Naive thymus-derived CD4-positive, alpha-beta T cell (primary cell): ENCODE measurements at regions of chr11 and their contacts with region 1.

Region 1: DNA sequence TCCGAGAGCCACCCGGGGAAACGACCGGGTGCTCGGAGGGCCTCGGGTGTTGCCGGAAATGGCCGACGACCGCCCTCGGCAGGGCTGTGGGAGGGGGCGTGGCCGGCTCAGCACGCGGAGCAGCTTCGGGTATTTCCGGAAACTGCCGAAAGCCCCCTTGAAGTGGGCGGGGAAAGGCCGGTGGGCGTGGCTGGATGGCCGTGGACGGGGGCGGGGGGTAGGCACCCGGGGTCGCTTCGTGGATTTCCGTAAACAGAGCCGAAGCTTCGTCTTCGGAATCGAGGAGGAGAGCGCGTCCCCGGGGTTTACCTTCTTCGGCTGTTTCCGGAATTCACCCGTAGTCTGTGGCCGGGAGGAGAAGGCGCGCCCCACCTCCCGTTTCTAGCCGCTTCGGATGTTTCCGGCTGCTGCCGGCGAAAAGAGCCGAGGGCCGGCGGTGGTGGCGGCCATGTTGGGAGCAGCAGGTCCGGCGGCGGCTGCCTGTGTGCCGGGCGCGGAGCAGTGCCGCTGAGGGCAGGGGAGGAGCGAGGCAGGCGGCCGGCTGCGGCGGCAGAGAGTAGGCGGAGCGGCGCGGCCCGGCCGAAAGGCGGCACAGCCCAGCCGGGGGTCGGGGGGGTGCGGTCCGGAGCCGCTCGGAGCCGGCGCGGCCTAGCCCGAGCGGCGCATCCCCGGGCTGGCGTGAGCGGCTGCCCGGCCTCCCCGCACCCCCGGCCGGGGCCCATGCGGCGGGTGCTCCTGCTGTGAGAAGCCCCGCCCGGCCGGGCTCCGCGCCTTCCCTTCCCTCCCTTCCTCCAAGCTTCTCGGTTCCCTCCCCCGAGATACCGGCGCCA is at the start of gene MARK2:
- DNase-seq: peak; percentile 99 to 100 (median 99)
- ATAC-seq: peak; percentile 93
- H3K4me3 ChIP-seq: peak within 1 kb of the TSS; percentile 87
- H3K4me3 Mint-ChIP-seq: peak within 1 kb of the TSS; percentile 86 to 99 (median 92)
- H3K27ac ChIP-seq: peak within 1 kb of the TSS; percentile 94
- H3K27ac Mint-ChIP-seq: peak within 1 kb of the TSS; percentile 74 to 97 (median 88)
- H3K4me1 ChIP-seq: peaks cover 32 to 35% of the 10 kb centered on the region in 2 donors
- H3K4me1 Mint-ChIP-seq: peaks cover 44 to 57% (median 54%) of the 10 kb centered on the region in 7 donors
- H3K27me3 ChIP-seq: no peaks in the 10 kb centered on the region
- H3K27me3 Mint-ChIP-seq: no peaks in the 10 kb centered on the region
- total RNA-seq, gene MARK2: 42.3 to 69.1 (median 56.8) TPM

Region 2: GRCh38 chr11:62726915-62727763 is 1111.8 kb before region 1 on chr11 and contains the start of gene HNRNPUL2:
- CTCF ChIA-PET with region 1: no interaction called
- POLR2A ChIA-PET with region 1: no interaction called
- intact Hi-C with region 1: loop called in 1 of 2 experiments (anchors 2 kb)
- DNase-seq: peak; percentile 96 to 100 (median 99)
- ATAC-seq: peak; percentile 89
- H3K4me3 ChIP-seq: peak within 1 kb of the TSS; percentile 87
- H3K4me3 Mint-ChIP-seq: peak within 1 kb of the TSS; percentile 91 to 99 (median 96)
- H3K27ac ChIP-seq: peak within 1 kb of the TSS; percentile 92
- H3K27ac Mint-ChIP-seq: peak within 1 kb of the TSS; percentile 95 to 100 (median 98)
- H3K4me1 ChIP-seq: peaks cover 36 to 38% of the 10 kb centered on the region in 2 donors
- H3K4me1 Mint-ChIP-seq: peaks cover 23 to 65% (median 58%) of the 10 kb centered on the region in 7 donors
- H3K27me3 ChIP-seq: no peaks in the 10 kb centered on the region
- H3K27me3 Mint-ChIP-seq: peaks cover 0 to 2% (median 0%) of the 10 kb centered on the region in 5 donors
- total RNA-seq, gene HNRNPUL2: 43.4 to 77.5 (median 65.3) TPM

Region 3: DNA sequence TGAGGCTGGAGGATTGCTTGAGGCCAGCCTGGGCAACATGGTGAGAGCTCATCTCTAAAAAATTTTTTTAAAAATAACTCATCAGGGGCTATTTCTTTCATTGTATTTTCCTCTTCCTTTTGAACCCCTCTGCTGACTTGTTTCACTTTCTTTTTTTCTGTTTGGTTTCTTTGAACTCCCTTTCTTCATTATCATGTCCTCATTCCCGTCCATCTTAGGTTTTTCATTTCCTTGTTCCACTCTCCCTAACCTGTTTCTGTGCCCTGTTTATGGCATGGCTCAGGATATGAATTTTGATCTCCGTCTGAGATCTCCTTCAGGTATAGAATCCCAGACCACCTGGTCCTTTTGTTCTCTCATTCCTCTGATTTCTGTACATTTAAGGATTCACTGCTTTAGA is 12.5 kb after region 1 on chr11:
- CTCF ChIA-PET with region 1: interaction called, 7 read pairs
- POLR2A ChIA-PET with region 1: interaction called, 3 read pairs
- intact Hi-C with region 1: loop called in 1 of 2 experiments (anchors 1 kb)
- DNase-seq: no peak
- ATAC-seq: no peak
- H3K4me3 ChIP-seq: peak overlapping the region; percentile 17
- H3K4me3 Mint-ChIP-seq: peak overlapping the region; percentile 58 to 83 (median 78)
- H3K27ac ChIP-seq: peak overlapping the region; percentile 59
- H3K27ac Mint-ChIP-seq: peak overlapping the region; percentile 57 to 90 (median 87)
- H3K4me1 ChIP-seq: peaks cover 42 to 46% of the 10 kb centered on the region in 2 donors
- H3K4me1 Mint-ChIP-seq: peaks cover 58 to 85% (median 76%) of the 10 kb centered on the region in 7 donors
- H3K27me3 ChIP-seq: no peaks in the 10 kb centered on the region
- H3K27me3 Mint-ChIP-seq: no peaks in the 10 kb centered on the region

Region 4: GRCh38 chr11:63906585-63906984 is 67.7 kb after region 1 on chr11:
- CTCF ChIA-PET with region 1: interaction called, 35 read pairs
- POLR2A ChIA-PET with region 1: interaction called, 13 read pairs
- intact Hi-C with region 1: loop called (anchors 1 kb)
- DNase-seq: peak in 7 of 9 donors; percentile 38 to 65 (median 60)
- ATAC-seq: peak; percentile 70
- H3K4me3 ChIP-seq: no peak overlapping the region
- H3K4me3 Mint-ChIP-seq: no peak overlapping the region
- H3K27ac ChIP-seq: no peak overlapping the region
- H3K27ac Mint-ChIP-seq: peak overlapping the region in 4 of 9 donors; percentile 17 to 80 (median 61)
- H3K4me1 ChIP-seq: no peaks in the 10 kb centered on the region
- H3K4me1 Mint-ChIP-seq: peaks cover 0 to 6% (median 3%) of the 10 kb centered on the region in 7 donors
- H3K27me3 ChIP-seq: no peaks in the 10 kb centered on the region
- H3K27me3 Mint-ChIP-seq: no peaks in the 10 kb centered on the region

Region 5: DNA sequence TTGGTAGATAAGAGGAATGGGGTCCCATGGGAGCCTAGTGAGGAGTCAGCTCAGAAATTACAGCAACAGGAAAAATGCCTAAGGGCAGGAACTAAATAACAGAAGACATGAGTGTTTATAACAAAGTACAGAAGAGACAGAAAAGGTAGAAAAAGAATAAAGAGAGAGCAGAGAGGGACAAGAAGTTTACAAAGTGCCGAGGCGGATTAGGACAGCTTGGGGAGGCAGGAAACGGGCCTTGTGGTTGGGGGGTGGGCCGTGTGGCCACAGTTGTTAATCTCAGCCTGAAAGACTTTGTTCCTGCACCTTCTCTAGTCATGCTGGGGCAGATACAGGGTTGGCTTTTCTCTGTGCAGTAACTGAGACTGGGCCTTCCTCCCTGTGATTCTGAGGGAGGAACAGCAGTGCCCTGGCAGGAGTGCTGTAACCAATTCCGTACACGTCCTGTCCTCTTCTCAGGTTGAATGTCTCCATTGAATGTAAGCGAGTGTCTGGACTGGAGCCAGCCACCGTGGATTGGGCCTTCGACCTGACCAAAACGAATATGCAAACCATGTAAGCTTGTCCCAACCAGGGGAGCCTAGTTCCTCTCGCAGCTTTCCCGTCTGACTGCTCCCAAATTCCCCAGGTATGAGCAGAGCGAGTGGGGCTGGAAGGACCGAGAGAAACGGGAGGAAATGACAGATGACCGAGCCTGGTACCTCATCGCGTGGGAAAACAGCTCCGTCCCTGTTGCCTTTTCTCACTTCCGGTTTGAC is 113.1 kb after region 1 on chr11:
- CTCF ChIA-PET with region 1: interaction called, 148 read pairs
- POLR2A ChIA-PET with region 1: interaction called, 6 read pairs
- intact Hi-C with region 1: no loop called
- DNase-seq: peak in 3 of 9 donors; percentile 15 to 36 (median 21)
- ATAC-seq: peak; percentile 32
- H3K4me3 ChIP-seq: peak overlapping the region; percentile 13
- H3K4me3 Mint-ChIP-seq: peak overlapping the region; percentile 6 to 74 (median 51)
- H3K27ac ChIP-seq: peak overlapping the region; percentile 41
- H3K27ac Mint-ChIP-seq: peak overlapping the region; percentile 44 to 85 (median 71)
- H3K4me1 ChIP-seq: peaks cover 15 to 28% of the 10 kb centered on the region in 2 donors
- H3K4me1 Mint-ChIP-seq: peaks cover 15 to 29% (median 22%) of the 10 kb centered on the region in 7 donors
- H3K27me3 ChIP-seq: no peaks in the 10 kb centered on the region
- H3K27me3 Mint-ChIP-seq: no peaks in the 10 kb centered on the region

Region 6: GRCh38 chr11:64165849-64166635 is 327.1 kb after region 1 on chr11 and contains the start of gene MACROD1:
- CTCF ChIA-PET with region 1: no interaction called
- POLR2A ChIA-PET with region 1: no interaction called
- intact Hi-C with region 1: loop called in 1 of 2 experiments (anchors 5 kb)
- DNase-seq: peak; percentile 52 to 87 (median 65)
- ATAC-seq: peak; percentile 95
- H3K4me3 ChIP-seq: peak within 1 kb of the TSS; percentile 74
- H3K4me3 Mint-ChIP-seq: peak within 1 kb of the TSS; percentile 85 to 94 (median 90)
- H3K27ac ChIP-seq: peak within 1 kb of the TSS; percentile 66
- H3K27ac Mint-ChIP-seq: peak within 1 kb of the TSS; percentile 51 to 83 (median 78)
- H3K4me1 ChIP-seq: peaks cover 0 to 5% of the 10 kb centered on the region in 2 donors
- H3K4me1 Mint-ChIP-seq: peaks cover 7 to 22% (median 16%) of the 10 kb centered on the region in 7 donors
- H3K27me3 ChIP-seq: no peaks in the 10 kb centered on the region
- H3K27me3 Mint-ChIP-seq: no peaks in the 10 kb centered on the region
- total RNA-seq, gene MACROD1: 5.4 to 12.4 (median 8.7) TPM